Left cardiac atrium (tissue), 4 donors: ENCODE measurements at regions of chr2 and their contacts with region 1.

Region 1: DNA sequence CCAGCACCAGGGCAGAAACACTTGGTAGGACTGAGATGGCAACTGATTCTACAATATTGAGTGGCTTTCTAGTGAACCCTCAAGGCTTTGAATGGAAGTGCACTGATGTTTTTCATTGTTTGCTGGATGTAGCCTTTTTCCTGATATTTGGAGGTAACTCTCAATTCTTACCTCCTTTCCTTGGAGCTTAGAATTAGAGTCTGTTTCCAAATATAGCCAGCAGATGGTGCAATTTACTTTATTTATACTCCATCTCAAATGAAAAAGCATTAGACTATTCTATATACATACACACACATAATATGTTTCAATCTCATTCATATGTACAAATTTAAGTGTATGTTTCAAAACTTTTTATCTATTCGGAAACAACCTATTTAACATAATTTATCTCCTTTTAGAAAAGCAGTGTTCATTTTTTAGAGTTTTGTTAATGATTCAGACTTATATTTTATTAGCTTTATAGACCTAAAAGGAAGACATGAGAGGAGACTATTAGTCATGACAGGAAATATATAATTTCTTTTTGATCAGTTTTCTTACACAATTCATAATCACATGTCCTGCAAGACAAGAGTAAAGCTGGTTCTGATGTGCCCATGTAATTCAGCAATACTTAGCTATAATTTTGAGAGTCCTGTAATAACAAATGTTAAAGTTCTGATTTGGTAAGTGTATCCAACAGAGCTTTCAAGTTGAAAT is 124.8 kb downstream of the NUP35 start:
- DNase-seq: no peak
- ATAC-seq: no peak

Region 2: DNA sequence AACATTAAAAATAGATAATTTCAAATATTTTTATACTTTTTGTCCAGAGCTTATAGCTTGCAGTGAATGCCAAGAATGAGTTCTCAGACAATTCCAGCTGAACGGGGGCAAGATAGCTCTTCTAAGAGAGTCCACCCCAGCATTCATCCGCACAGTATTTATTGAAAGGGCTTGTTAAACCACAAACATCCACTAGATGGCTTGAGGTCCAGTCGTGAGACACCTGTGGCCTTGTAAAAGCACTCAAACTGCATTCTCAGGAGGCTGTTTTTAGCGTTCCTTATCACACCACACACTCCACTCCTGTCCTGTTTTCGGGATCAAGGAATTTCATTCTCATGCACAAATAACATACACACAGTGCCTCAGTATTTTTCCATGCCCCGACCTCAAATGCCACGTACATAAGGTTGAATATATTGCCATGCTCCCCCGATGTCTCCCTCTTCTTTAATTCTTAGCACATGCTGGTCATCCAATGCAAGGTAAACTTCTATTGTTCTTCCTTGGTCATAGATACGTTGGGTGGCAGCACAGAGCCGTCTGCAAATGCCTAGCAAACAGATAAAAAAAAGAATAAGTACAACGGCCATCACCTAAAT is 485.6 kb before region 1 on chr2:
- intact Hi-C with region 1: no loop called
- DNase-seq: no peak
- ATAC-seq: peak; percentile 56 to 68

Region 3: DNA sequence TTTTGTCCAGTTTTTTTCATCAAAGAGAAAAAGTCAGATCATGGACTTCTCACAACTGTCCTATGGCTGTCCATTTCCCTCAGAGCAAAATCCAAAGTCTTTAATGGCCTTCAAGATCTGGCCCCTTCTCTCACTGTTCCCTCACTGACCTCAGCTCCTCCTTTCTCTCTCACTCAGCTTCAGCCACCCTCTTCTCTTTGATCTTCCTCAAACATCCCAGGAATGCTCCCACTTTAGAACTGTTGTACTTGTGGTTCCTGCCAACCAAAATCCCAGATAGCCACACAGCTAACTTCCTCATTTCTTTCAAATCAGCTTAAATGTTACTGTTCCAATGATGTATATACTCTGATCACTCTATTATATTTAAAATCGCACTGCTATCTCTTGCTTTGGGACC is 41.9 kb before region 1 on chr2:
- intact Hi-C with region 1: no loop called
- DNase-seq: no peak
- ATAC-seq: peak in 1 of 2 donors; percentile 63

Region 4: DNA sequence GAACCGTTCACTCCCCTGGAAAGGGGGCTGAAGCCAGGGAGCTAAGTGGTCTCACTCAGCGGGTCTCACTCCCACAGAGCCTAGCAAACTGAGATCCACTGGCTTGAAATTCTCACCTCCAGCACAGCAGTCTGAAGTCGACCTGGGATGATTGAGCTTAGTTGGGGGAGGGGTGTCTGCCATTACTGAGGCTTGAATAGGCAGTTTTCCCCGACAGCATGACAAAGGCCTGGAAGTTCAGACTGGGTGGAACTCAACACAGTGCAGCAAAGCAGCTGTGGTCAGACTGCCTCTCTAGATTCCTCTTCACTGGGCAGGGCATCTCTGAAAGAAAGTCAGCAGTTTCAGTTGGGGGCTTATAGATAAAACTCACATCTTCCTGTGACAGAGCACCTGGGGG is 167.7 kb after region 1 on chr2:
- intact Hi-C with region 1: no loop called
- DNase-seq: no peak
- ATAC-seq: no peak

Region 5: DNA sequence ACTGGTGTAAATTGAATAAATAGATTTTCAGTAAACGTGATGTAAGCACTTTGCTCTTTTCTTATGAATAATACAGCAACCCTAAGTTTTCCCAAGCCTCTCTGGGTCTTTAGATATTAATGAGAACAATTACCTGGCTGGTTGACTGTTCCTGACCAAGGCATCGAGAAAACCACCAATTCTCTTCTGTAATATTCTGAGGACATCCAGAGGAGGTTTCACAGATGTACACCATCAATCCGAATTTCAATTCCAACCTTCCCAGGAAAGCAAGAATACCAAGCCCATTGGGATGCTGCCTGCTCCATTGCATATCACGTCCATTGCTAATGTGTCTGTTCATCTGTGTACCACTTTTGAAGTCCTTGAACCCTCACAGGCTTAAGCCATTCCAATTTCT is 447.0 kb after region 1 on chr2:
- intact Hi-C with region 1: loop called in 1 of 2 experiments (anchors 5 kb)
- DNase-seq: no peak
- ATAC-seq: no peak